ENCODE measurements at regions of chr22 and their contacts with region 1.

Region 1: DNA sequence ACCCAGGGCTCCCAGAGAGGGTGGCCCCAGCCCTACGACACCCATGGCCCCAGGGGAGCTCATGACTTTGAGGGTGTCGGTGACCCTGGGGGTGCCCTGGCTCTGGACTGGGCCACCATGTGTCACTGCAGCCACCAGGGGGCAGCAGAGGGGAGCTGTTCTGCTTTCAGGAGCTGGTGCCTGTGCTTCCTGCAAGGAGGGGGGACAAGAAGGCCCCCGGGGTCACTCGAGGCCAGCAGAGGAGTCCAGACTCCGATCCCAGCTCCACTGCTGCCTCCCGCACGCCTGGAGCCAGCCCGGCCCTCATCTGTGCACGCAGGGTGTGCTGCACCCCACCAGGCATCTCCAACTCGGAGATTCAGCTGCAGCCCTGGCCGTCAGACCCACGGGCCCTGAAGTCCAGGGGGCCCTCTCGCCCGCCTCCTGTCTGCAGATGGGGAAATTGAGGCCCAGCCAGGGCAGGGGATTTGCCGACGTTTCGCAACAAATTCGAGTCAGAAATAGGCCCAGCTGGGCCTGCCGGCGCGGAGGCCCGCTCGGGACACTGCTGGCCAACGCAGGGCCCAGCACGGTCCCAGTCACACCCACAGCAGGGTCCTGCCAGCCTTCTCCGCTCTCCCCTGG is 29.5 kb upstream of the WNT7B start:
- DNase-seq: peak; percentile 97 to 99
- ATAC-seq: peak; percentile 89
- H3K4me3 ChIP-seq: no peak overlapping the region
- H3K27ac ChIP-seq: peak overlapping the region; percentile 19 to 87
- H3K4me1 ChIP-seq: no peaks in the 10 kb centered on the region
- H3K27me3 ChIP-seq: no peaks in the 10 kb centered on the region

Region 2: DNA sequence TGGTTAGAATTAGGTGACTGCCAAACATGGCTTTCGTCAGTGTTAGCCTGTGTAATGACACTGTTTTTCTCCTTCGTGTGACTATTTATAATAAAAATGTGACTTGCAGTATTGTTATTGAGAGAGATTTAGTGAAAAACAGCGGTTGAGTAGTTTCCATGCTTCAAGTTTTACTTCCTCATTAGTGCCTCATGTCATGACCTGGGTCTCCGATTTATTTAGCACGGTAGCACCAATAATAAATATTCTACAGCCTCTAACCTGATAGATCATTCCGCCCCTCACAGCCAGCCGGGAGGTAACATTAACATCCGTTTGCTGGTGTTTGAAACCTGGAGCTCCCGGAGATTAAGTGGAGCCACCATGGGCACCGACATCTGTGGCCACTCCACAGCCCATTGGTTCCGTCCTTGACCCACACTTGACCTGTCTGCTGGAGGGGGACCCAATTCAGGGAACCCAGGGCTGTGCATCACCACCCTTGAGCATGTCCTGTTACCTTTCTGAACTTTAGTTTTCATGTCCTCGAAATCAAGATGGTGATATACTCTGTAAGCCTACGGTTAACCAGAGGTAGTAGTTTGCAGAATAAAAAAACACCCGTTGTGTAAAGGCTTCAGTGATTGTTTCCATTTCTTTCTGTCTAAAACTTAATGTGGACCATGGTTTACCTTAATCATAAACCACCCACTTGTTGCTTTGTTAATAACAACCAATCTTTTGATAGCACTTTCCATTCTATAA is 230.8 kb before region 1 on chr22:
- intact Hi-C with region 1: no loop called
- DNase-seq: no peak
- ATAC-seq: no peak
- H3K4me3 ChIP-seq: no peak overlapping the region
- H3K27ac ChIP-seq: no peak overlapping the region
- H3K4me1 ChIP-seq: no peaks in the 10 kb centered on the region
- H3K27me3 ChIP-seq: no peaks in the 10 kb centered on the region

Region 3: GRCh38 chr22:46071451-46072109 is 65.1 kb after region 1 on chr22:
- intact Hi-C with region 1: loop called (anchors 5 kb)
- DNase-seq: peak; percentile 95
- ATAC-seq: peak; percentile 48
- H3K4me3 ChIP-seq: peak overlapping the region; percentile 63 to 95
- H3K27ac ChIP-seq: peak overlapping the region; percentile 95 to 98
- H3K4me1 ChIP-seq: peaks cover 0 to 3% of the 10 kb centered on the region in 2 donors
- H3K27me3 ChIP-seq: no peaks in the 10 kb centered on the region

Region 4: GRCh38 chr22:46116491-46116958 is 110.0 kb after region 1 on chr22:
- intact Hi-C with region 1: loop called (anchors 1 to 2 kb)
- DNase-seq: peak; percentile 96 to 99
- ATAC-seq: peak; percentile 90
- H3K4me3 ChIP-seq: no peak overlapping the region
- H3K27ac ChIP-seq: no peak overlapping the region
- H3K4me1 ChIP-seq: no peaks in the 10 kb centered on the region
- H3K27me3 ChIP-seq: no peaks in the 10 kb centered on the region

Region 5: DNA sequence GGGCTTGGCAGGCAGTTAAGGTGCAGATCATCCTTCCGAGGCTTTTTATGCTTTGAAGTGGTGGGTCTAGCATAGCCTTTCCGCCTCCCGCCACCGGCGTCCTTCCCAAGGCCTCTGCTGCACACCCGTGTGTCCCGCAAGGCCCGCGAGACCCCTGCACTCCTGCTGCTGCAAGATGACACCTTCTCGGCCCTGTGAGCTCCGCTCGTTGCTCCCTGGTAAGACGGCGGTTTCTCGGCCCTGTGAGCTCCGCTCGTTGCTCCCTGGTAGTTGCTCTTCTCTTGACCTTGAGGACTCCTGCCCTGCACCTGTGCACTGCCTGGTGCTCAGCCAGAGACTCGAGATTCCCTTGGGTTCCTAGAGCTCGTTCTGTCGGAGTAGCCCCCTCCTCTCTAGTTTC is 311.2 kb after region 1 on chr22:
- intact Hi-C with region 1: loop called in 1 of 2 experiments (anchors 5 kb)
- DNase-seq: peak in 1 of 2 donors; percentile 63
- ATAC-seq: no peak
- H3K4me3 ChIP-seq: no peak overlapping the region
- H3K27ac ChIP-seq: no peak overlapping the region
- H3K4me1 ChIP-seq: no peaks in the 10 kb centered on the region
- H3K27me3 ChIP-seq: no peaks in the 10 kb centered on the region

Region 6: DNA sequence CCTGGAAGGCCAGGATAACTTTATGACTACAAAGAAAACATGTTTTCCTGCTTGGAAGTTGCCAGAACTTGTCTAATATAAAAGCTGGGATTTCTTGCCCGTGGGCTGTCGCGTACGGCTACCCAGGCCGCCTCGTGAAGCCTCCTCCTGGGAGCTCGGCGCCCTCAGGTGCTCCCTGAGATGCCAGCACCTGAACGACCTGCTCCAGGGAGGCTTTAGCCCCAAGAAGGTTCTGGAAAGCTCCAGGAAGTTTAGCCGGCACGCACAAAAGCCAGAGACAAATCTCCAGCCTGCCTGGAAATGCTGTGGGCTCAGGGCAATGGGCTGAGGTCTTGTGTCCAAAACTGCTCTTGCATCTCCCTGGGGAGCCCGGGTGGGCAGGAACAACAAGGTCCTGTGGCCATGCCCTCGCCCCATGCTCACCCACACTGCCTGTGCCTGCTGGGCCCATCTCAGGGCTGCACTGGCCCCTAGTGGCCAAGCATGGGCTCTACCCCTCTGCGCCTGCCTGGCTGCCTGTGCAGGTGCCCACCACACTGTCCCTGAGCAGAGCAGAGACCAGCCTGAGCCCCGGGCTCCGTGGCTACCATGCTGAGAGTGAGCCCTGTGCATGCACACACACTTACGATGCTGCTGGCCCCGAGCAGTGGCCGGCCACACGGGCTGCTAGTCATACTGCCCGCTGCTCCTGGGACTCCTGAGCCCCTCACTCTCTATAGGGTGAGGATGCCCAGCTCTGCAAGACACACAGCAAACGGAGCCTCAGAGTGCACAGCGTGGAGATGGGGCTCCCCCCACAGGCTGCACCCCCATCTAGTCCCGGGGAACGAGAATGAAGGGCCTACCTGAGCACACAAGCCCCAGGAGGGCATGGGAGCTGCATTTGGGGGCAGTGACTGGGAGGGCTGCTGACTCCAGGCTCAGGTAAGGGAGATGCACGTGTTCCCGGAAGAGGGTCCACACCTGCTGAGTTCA is 535.8 kb after region 1 on chr22:
- intact Hi-C with region 1: loop called in 1 of 2 experiments (anchors 10 kb)
- DNase-seq: peak; percentile 83 to 88
- ATAC-seq: peak; percentile 90
- H3K4me3 ChIP-seq: no peak overlapping the region
- H3K27ac ChIP-seq: no peak overlapping the region
- H3K4me1 ChIP-seq: no peaks in the 10 kb centered on the region
- H3K27me3 ChIP-seq: no peaks in the 10 kb centered on the region